AG04449 (cell line): ENCODE measurements at regions of chr12 and their contacts with region 1.

Region 1: GRCh38 chr12:111868676-111869588 is 26.9 kb downstream of the MAPKAPK5 start:
- DNase-seq: no peak
- H3K4me3 ChIP-seq: no peak overlapping the region
- CTCF ChIP-seq: no peak

Region 2: GRCh38 chr12:111858778-111859177 is 10.2 kb before region 1 on chr12:
- CTCF ChIA-PET with region 1: interaction called, 14 read pairs
- POLR2A ChIA-PET with region 1: no interaction called
- DNase-seq: no peak
- H3K4me3 ChIP-seq: no peak overlapping the region
- CTCF ChIP-seq: no peak